ENCODE measurements at regions of chr6 and their contacts with region 1.

Region 1: GRCh38 chr6:105077596-105078385 is 102.0 kb downstream of the POPDC3 start:
- DNase-seq: peak; percentile 51
- ATAC-seq: peak; percentile 56
- H3K4me3 ChIP-seq: no peak overlapping the region
- H3K27ac ChIP-seq: no peak overlapping the region
- H3K4me1 ChIP-seq: peaks cover 7% of the 10 kb centered on the region
- H3K27me3 ChIP-seq: no peaks in the 10 kb centered on the region; a peak in 1 of 5 replicates
- CTCF ChIP-seq: peak; percentile 60
- EP300 ChIP-seq: no peak
- POLR2A ChIP-seq: no peak
- RAD21 ChIP-seq: peak; percentile 24; the same call in 1 of the 2 replicates

Region 2: GRCh38 chr6:104682722-104683643 is 394.8 kb before region 1 on chr6:
- CTCF ChIA-PET with region 1: interaction called, 5 read pairs
- POLR2A ChIA-PET with region 1: no interaction called
- in situ Hi-C with region 1: no loop called
- intact Hi-C with region 1: loop called (anchors 5 kb)
- DNase-seq: peak; percentile 40
- ATAC-seq: peak; percentile 92
- H3K4me3 ChIP-seq: no peak overlapping the region
- H3K27ac ChIP-seq: no peak overlapping the region
- H3K4me1 ChIP-seq: no peaks in the 10 kb centered on the region
- H3K27me3 ChIP-seq: 0 out of 5 replicates have a peak, but pooled peaks cover 0 to 4% of the 10 kb centered on the region in 2 experiments
- CTCF ChIP-seq: peak; percentile 83
- EP300 ChIP-seq: no peak
- POLR2A ChIP-seq: no peak
- RAD21 ChIP-seq: peak; percentile 64

Region 3: GRCh38 chr6:104789770-104790190 is 288.0 kb before region 1 on chr6:
- CTCF ChIA-PET with region 1: no interaction called
- POLR2A ChIA-PET with region 1: no interaction called
- in situ Hi-C with region 1: no loop called
- intact Hi-C with region 1: loop called (anchors 1 kb)
- DNase-seq: peak; percentile 18
- ATAC-seq: peak; percentile 71
- H3K4me3 ChIP-seq: no peak overlapping the region
- H3K27ac ChIP-seq: no peak overlapping the region
- H3K4me1 ChIP-seq: no peaks in the 10 kb centered on the region
- H3K27me3 ChIP-seq: no peaks in the 10 kb centered on the region
- CTCF ChIP-seq: peak; percentile 46
- EP300 ChIP-seq: no peak
- POLR2A ChIP-seq: no peak
- RAD21 ChIP-seq: no peak

Region 4: GRCh38 chr6:104896914-104897313 is 180.9 kb before region 1 on chr6:
- CTCF ChIA-PET with region 1: interaction called, 4 read pairs
- POLR2A ChIA-PET with region 1: no interaction called
- in situ Hi-C with region 1: no loop called
- intact Hi-C with region 1: loop called (anchors 2 kb)
- DNase-seq: no peak
- ATAC-seq: no peak
- H3K4me3 ChIP-seq: no peak overlapping the region
- H3K27ac ChIP-seq: no peak overlapping the region
- H3K4me1 ChIP-seq: no peaks in the 10 kb centered on the region
- H3K27me3 ChIP-seq: no peaks in the 10 kb centered on the region; a peak in 1 of 5 replicates
- CTCF ChIP-seq: no peak
- EP300 ChIP-seq: no peak
- POLR2A ChIP-seq: no peak
- RAD21 ChIP-seq: no peak

Region 5: GRCh38 chr6:104940881-104941728 is 136.7 kb before region 1 on chr6:
- CTCF ChIA-PET with region 1: interaction called, 33 read pairs
- POLR2A ChIA-PET with region 1: no interaction called
- in situ Hi-C with region 1: loop called (anchors 5 kb)
- intact Hi-C with region 1: loop called (anchors 1 kb)
- DNase-seq: peak; percentile 43
- ATAC-seq: peak; percentile 87
- H3K4me3 ChIP-seq: peak overlapping the region; percentile 74 to 92 (median 76)
- H3K27ac ChIP-seq: peak overlapping the region; percentile 88
- H3K4me1 ChIP-seq: peaks cover 12% of the 10 kb centered on the region
- H3K27me3 ChIP-seq: no peaks in the 10 kb centered on the region
- CTCF ChIP-seq: peak; percentile 75
- EP300 ChIP-seq: no peak
- POLR2A ChIP-seq: no peak; a peak in 1 of 4 replicates
- RAD21 ChIP-seq: peak; percentile 87

Region 6: GRCh38 chr6:104995989-104996617 is 81.7 kb before region 1 on chr6:
- CTCF ChIA-PET with region 1: no interaction called
- POLR2A ChIA-PET with region 1: no interaction called
- in situ Hi-C with region 1: no loop called
- intact Hi-C with region 1: loop called (anchors 1 kb)
- DNase-seq: no peak
- ATAC-seq: no peak
- H3K4me3 ChIP-seq: no peak overlapping the region
- H3K27ac ChIP-seq: no peak overlapping the region
- H3K4me1 ChIP-seq: no peaks in the 10 kb centered on the region
- H3K27me3 ChIP-seq: no peaks in the 10 kb centered on the region
- CTCF ChIP-seq: peak; percentile 31; the same call in 1 of the 2 replicates
- EP300 ChIP-seq: no peak
- POLR2A ChIP-seq: no peak
- RAD21 ChIP-seq: no peak

Region 7: GRCh38 chr6:105346052-105346451 is 268.3 kb after region 1 on chr6:
- CTCF ChIA-PET with region 1: no interaction called
- POLR2A ChIA-PET with region 1: no interaction called
- in situ Hi-C with region 1: no loop called
- intact Hi-C with region 1: no loop called
- DNase-seq: peak; percentile 41
- ATAC-seq: no peak
- H3K4me3 ChIP-seq: no peak overlapping the region
- H3K27ac ChIP-seq: no peak overlapping the region
- H3K4me1 ChIP-seq: no peaks in the 10 kb centered on the region
- H3K27me3 ChIP-seq: no peaks in the 10 kb centered on the region
- CTCF ChIP-seq: no peak
- EP300 ChIP-seq: no peak
- POLR2A ChIP-seq: no peak
- RAD21 ChIP-seq: no peak

Measured in HepG2 (cell line).